ENCODE measurements at regions of chr4 and their contacts with region 1.

Region 1: GRCh38 chr4:1130316-1131186 is 17.2 kb upstream of the RNF212 start:
- DNase-seq: peak; percentile 69 to 83 (median 76)
- H3K4me3 ChIP-seq: no peak overlapping the region
- H3K4me3 Mint-ChIP-seq: no peak overlapping the region
- H3K27ac ChIP-seq: no peak overlapping the region
- H3K27ac Mint-ChIP-seq: peak overlapping the region in 1 of 7 donors; percentile 34
- H3K4me1 ChIP-seq: no peaks in the 10 kb centered on the region
- H3K4me1 Mint-ChIP-seq: peaks cover 0 to 4% (median 2%) of the 10 kb centered on the region in 4 donors
- H3K27me3 ChIP-seq: no peaks in the 10 kb centered on the region
- H3K27me3 Mint-ChIP-seq: peaks cover 1 to 10% of the 10 kb centered on the region in 2 donors

Region 2: GRCh38 chr4:1167247-1167949 is 36.8 kb after region 1 on chr4:
- CTCF ChIA-PET with region 1: interaction called, 16 read pairs
- POLR2A ChIA-PET with region 1: no interaction called
- intact Hi-C with region 1: loop called (anchors 1 kb)
- DNase-seq: peak; percentile 81 to 91 (median 84)
- H3K4me3 ChIP-seq: peak overlapping the region; percentile 47 to 78
- H3K4me3 Mint-ChIP-seq: peak overlapping the region; percentile 83 to 90 (median 87)
- H3K27ac ChIP-seq: peak overlapping the region; percentile 72
- H3K27ac Mint-ChIP-seq: peak overlapping the region; percentile 51 to 92 (median 87)
- H3K4me1 ChIP-seq: peaks cover 25% of the 10 kb centered on the region
- H3K4me1 Mint-ChIP-seq: peaks cover 9 to 24% (median 16%) of the 10 kb centered on the region in 4 donors
- H3K27me3 ChIP-seq: peaks cover 9% of the 10 kb centered on the region
- H3K27me3 Mint-ChIP-seq: peaks cover 0 to 5% of the 10 kb centered on the region in 2 donors

Region 3: GRCh38 chr4:1266881-1267763 is 136.6 kb after region 1 on chr4:
- CTCF ChIA-PET with region 1: interaction called, 94 read pairs
- POLR2A ChIA-PET with region 1: interaction called, 7 read pairs
- intact Hi-C with region 1: loop called (anchors 1 kb)
- DNase-seq: peak in 2 of 5 donors; percentile 25 to 36
- H3K4me3 ChIP-seq: peak overlapping the region in 1 of 2 donors; percentile 62
- H3K4me3 Mint-ChIP-seq: peak overlapping the region; percentile 75 to 90 (median 88)
- H3K27ac ChIP-seq: peak overlapping the region; percentile 63
- H3K27ac Mint-ChIP-seq: peak overlapping the region; percentile 94 to 100 (median 95)
- H3K4me1 ChIP-seq: peaks cover 12% of the 10 kb centered on the region
- H3K4me1 Mint-ChIP-seq: peaks cover 9 to 19% (median 12%) of the 10 kb centered on the region in 4 donors
- H3K27me3 ChIP-seq: no peaks in the 10 kb centered on the region
- H3K27me3 Mint-ChIP-seq: no peaks in the 10 kb centered on the region

Region 4: GRCh38 chr4:1351854-1352633 is 221.5 kb after region 1 on chr4:
- CTCF ChIA-PET with region 1: interaction called, 48 read pairs
- POLR2A ChIA-PET with region 1: no interaction called
- intact Hi-C with region 1: loop called (anchors 1 kb)
- DNase-seq: peak; percentile 81 to 86 (median 83)
- H3K4me3 ChIP-seq: no peak overlapping the region
- H3K4me3 Mint-ChIP-seq: peak overlapping the region in 1 of 8 donors; percentile 57
- H3K27ac ChIP-seq: no peak overlapping the region
- H3K27ac Mint-ChIP-seq: peak overlapping the region; percentile 68 to 93 (median 85)
- H3K4me1 ChIP-seq: peaks cover 20% of the 10 kb centered on the region
- H3K4me1 Mint-ChIP-seq: peaks cover 16 to 43% (median 20%) of the 10 kb centered on the region in 4 donors
- H3K27me3 ChIP-seq: no peaks in the 10 kb centered on the region
- H3K27me3 Mint-ChIP-seq: no peaks in the 10 kb centered on the region

Region 5: DNA sequence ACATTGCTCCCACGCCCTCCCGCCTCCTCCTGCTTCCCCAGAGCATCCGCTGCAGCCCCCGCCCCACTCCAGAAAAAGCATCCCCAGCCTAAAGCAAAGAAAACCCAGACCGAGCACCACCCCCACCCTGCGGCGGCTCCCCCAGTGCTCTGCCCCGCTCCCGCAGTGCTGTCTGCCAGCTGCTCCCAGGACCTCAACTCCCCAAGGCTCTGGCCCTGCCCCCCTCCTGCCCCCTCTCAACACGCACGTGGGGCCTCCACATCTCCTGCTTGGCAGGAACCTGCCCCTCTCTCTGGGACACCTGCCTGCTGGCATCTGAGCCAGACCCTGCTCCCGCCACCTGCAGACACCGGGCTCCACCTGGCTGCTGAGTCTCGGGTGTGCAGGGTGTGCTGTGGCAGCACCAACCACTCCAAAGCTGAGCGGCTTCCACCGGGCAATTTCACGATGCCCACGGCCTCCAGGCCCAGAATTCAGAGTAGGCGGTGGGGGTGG is 474.2 kb after region 1 on chr4:
- CTCF ChIA-PET with region 1: no interaction called
- POLR2A ChIA-PET with region 1: no interaction called
- intact Hi-C with region 1: loop called (anchors 10 kb)
- DNase-seq: peak; percentile 63 to 79 (median 74)
- H3K4me3 ChIP-seq: peak overlapping the region; percentile 23 to 31
- H3K4me3 Mint-ChIP-seq: peak overlapping the region; percentile 63 to 81 (median 76)
- H3K27ac ChIP-seq: peak overlapping the region; percentile 21
- H3K27ac Mint-ChIP-seq: peak overlapping the region in 6 of 7 donors; percentile 73 to 96 (median 90)
- H3K4me1 ChIP-seq: peaks cover 36% of the 10 kb centered on the region
- H3K4me1 Mint-ChIP-seq: peaks cover 7 to 30% (median 22%) of the 10 kb centered on the region in 4 donors
- H3K27me3 ChIP-seq: no peaks in the 10 kb centered on the region
- H3K27me3 Mint-ChIP-seq: no peaks in the 10 kb centered on the region